GM12878 (cell line): ENCODE measurements at regions of chr3 and their contacts with region 1.

Region 1: GRCh38 chr3:123489400-123490004 is 40.6 kb upstream of the ADCY5 start:
- DNase-seq: no peak
- ATAC-seq: peak; percentile 82
- H3K4me3 ChIP-seq: no peak overlapping the region
- H3K27ac ChIP-seq: no peak overlapping the region
- H3K4me1 ChIP-seq: no peaks in the 10 kb centered on the region
- H3K27me3 ChIP-seq: no peaks in the 10 kb centered on the region
- CTCF ChIP-seq: peak; percentile 84 to 90 (median 88)
- EP300 ChIP-seq: no peak
- POLR2A ChIP-seq: no peak
- RAD21 ChIP-seq: peak; percentile 86

Region 2: GRCh38 chr3:123328851-123329635 is 160.5 kb before region 1 on chr3:
- CTCF ChIA-PET with region 1: interaction called, 51 read pairs
- POLR2A ChIA-PET with region 1: no interaction called
- RAD21 ChIA-PET with region 1: interaction called, 21 read pairs
- SMC1A ChIA-PET with region 1: interaction called, 5 read pairs
- in situ Hi-C with region 1: loop called (anchors 5 kb)
- intact Hi-C with region 1: loop called (anchors 1 kb)
- DNase-seq: no peak
- ATAC-seq: peak; percentile 98
- H3K4me3 ChIP-seq: no peak overlapping the region
- H3K27ac ChIP-seq: no peak overlapping the region
- H3K4me1 ChIP-seq: no peaks in the 10 kb centered on the region
- H3K27me3 ChIP-seq: no peaks in the 10 kb centered on the region; a peak in 2 of 4 replicates
- CTCF ChIP-seq: peak; percentile 87 to 90 (median 89)
- EP300 ChIP-seq: no peak
- POLR2A ChIP-seq: no peak
- RAD21 ChIP-seq: peak; percentile 63

Region 3: DNA sequence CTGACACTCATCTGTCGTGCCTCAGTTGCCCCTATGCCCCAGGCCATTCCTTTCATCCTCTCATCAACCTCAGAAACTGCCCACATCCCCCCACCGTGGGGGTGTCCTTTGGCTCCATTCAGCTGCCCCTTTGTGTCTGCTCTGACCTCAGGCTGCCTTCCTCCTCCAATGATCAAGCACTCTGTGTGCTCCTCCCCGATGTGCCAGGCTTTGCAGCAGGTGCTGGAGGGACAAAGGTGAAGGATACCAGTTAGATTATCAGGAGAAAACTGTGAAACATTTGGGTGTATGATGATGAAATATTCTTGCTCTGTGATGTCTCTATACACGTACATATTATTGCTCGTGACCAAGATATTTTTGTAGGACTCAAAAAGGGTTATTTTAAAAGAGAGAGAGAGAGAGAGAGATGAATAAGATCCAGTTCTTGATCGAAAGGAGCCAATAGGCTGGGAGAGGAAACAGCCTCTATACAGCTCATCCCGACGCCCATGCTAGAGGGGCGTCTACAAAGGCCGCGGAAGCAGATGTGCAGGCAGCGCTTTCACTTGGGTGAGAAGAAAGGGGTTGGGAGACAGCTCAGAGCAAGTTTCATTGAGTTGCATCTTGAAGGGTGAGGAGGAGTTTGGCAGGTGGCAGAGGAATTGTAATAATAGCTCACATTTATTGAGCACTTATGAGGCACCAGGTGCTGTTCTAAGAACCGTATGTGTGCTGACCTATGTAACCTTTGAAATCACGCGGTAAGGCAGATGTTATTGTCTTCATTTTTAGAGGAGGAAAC is 12.3 kb before region 1 on chr3:
- CTCF ChIA-PET with region 1: interaction called, 21 read pairs
- POLR2A ChIA-PET with region 1: no interaction called
- RAD21 ChIA-PET with region 1: no interaction called
- SMC1A ChIA-PET with region 1: no interaction called
- in situ Hi-C with region 1: no loop called
- intact Hi-C with region 1: no loop called
- DNase-seq: no peak
- ATAC-seq: no peak
- H3K4me3 ChIP-seq: no peak overlapping the region
- H3K27ac ChIP-seq: no peak overlapping the region
- H3K4me1 ChIP-seq: no peaks in the 10 kb centered on the region
- H3K27me3 ChIP-seq: peaks cover 0 to 2% of the 10 kb centered on the region in 2 experiments; a peak in 1 of 4 replicates
- CTCF ChIP-seq: no peak
- EP300 ChIP-seq: no peak
- POLR2A ChIP-seq: no peak
- RAD21 ChIP-seq: no peak